ENCODE measurements at regions of chr12 and their contacts with region 1.

Region 1: DNA sequence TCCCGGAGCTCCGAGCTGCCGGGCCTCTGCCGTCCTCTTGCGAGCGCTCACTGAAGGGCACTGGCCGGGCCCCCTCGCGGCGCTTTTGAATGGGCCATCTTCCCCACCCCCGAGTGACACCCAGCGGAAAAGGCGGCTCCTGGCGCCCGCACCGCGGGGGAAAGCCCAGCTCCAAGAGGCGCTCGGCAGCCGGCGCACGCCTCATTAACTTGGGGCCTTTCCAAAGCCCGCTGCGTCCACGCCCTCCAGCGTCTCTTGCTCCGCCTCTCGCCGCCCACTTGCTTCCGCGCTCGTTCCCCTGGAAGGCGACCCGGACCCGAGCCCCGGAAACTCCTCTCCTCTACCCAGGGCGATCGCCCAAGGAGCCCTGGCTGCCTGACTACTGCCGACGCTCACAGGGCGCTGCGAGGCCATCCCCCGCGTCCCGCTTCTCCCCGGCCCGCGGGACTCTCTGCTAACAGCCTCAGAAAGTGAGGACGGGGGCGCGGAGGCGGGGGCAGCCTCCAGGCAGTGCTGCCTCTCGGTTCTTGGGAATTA is at the start of gene PHLDA1:
- DNase-seq: peak; percentile 75
- H3K4me3 ChIP-seq: peak within 1 kb of the TSS; percentile 70
- H3K27me3 ChIP-seq: no peaks in the 10 kb centered on the region
- CTCF ChIP-seq: peak; percentile 78
- polyA plus RNA-seq, gene PHLDA1: 8.1 and 12.1 TPM in 2 replicates

Region 2: GRCh38 chr12:75177997-75178396 is 853.6 kb before region 1 on chr12:
- CTCF ChIA-PET with region 1: no interaction called
- POLR2A ChIA-PET with region 1: no interaction called
- DNase-seq: peak; percentile 78
- H3K4me3 ChIP-seq: no peak overlapping the region
- H3K27me3 ChIP-seq: no peaks in the 10 kb centered on the region
- CTCF ChIP-seq: no peak

Region 3: DNA sequence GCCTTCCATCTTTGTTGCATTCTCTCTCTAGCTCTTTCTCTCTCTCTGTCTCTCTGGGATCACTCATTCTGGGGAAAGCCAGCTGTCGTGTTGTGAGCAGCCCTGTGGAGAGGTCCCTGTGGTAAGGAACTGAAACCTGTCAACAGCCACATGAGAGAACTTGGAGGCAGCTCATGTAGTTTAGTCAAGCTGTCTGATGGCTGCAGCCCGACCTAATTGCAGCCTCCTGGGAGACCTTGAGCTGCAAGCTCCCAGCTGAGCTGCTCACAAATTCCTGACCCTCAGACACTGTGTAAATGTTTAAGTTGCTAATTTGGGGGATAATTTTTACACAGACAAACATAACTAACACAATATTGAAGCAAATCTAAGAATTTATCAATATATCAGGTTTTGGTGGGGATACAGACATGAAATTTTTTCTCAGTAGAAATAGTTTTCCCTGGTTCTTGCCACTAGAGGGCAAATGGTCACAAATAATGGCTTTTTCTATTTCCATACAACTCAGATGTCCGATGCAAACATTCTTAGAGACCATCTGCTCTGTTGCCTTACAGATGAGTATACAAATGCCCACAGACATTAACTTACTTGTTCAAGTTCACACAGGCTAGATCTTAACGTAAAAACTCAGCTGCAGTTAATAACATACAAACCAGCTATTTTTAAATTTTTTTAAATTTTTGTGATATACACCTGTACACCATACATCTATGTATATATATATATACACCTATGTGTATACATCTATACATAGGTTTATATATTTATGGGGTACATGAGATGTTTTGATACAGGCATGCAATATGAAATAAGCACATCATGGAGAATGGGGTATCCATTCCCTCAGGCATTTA is 504.7 kb before region 1 on chr12:
- CTCF ChIA-PET with region 1: interaction called, 98 read pairs
- POLR2A ChIA-PET with region 1: interaction called, 7 read pairs
- DNase-seq: no peak
- H3K4me3 ChIP-seq: no peak overlapping the region
- H3K27me3 ChIP-seq: no peaks in the 10 kb centered on the region
- CTCF ChIP-seq: peak; percentile 63

Region 4: GRCh38 chr12:75623631-75624118 is 407.9 kb before region 1 on chr12:
- CTCF ChIA-PET with region 1: interaction called, 11 read pairs
- POLR2A ChIA-PET with region 1: no interaction called
- DNase-seq: no peak
- H3K4me3 ChIP-seq: no peak overlapping the region
- H3K27me3 ChIP-seq: no peaks in the 10 kb centered on the region
- CTCF ChIP-seq: peak; percentile 38

Region 5: DNA sequence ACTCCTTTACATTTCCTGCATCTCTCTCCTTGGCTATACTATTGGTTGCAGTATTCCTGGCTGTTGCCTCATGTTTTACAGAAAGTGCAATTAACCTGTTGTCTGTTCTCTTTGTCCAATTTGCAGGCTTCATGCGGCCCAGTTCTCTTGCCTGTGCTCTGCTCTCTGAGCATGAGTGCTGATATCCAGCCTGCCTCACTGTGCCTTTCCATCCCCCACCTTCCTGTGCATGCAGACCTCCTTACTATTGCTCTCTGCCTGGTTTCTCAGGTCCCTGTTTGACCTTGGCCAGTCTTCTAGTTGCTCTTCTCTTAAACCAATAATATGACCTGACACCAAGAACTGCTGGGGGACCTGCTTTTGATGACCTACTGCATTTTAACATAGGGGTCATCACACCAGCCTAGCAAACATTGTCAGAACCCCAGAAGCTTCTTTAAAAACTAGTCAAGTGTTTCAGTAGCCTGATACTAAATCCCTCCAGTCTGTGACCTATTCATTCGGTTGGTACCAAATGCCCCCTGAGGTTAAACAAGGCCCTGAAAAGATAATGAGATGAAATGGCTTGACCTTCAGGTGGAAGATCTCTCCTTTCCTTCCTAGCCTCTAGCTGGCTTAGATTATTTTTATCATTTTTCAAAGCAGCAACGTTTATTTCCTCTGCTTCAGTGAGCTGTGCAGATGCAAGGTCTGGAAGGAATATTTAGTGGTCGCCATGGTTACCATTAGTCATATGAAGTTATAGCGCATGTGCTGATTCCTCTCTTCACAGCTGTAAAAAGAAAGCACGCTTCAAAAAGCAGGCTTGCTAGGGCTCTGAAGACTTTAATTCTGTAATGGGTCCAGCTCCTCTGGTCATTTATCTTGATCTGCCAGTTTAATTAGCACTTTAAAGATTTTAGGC is 216.5 kb before region 1 on chr12:
- CTCF ChIA-PET with region 1: interaction called, 10 read pairs
- POLR2A ChIA-PET with region 1: no interaction called
- DNase-seq: peak; percentile 91
- H3K4me3 ChIP-seq: no peak overlapping the region
- H3K27me3 ChIP-seq: no peaks in the 10 kb centered on the region
- CTCF ChIP-seq: no peak

Region 6: DNA sequence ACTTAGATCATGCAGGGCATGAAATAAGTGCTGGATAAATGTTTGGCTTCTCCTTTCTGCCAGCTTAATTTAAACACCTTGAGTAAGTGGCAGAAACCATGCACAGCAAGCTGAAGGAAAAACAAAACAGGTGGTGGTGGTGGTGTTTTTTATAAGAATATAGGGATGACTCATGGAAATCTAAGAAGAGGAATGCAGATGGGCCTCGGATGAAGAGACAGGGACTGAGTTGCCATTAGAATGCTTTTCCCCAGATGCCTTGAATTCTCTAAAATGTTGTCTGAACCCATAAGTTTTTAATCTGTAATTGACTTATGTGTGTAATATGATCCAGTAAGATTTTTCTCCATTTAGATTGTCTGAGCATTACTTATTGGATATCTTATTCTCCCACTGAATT is 639.2 kb after region 1 on chr12:
- CTCF ChIA-PET with region 1: no interaction called
- POLR2A ChIA-PET with region 1: no interaction called
- DNase-seq: peak; percentile 84
- H3K4me3 ChIP-seq: no peak overlapping the region
- H3K27me3 ChIP-seq: no peaks in the 10 kb centered on the region
- CTCF ChIP-seq: no peak